ENCODE measurements at regions of chr5 and their contacts with region 1.

Region 1: GRCh38 chr5:139787568-139788293 is 7.9 kb upstream of the PSD2 start:
- DNase-seq: peak; percentile 95
- H3K4me3 Mint-ChIP-seq: peak overlapping the region; percentile 85
- H3K27ac Mint-ChIP-seq: peak overlapping the region; percentile 19
- H3K4me1 Mint-ChIP-seq: peaks cover 6% of the 10 kb centered on the region
- H3K27me3 Mint-ChIP-seq: peaks cover 42% of the 10 kb centered on the region

Region 2: GRCh38 chr5:139817362-139817761 is 29.6 kb after region 1 on chr5:
- intact Hi-C with region 1: no loop called
- DNase-seq: no peak
- H3K4me3 Mint-ChIP-seq: no peak overlapping the region
- H3K27ac Mint-ChIP-seq: no peak overlapping the region
- H3K4me1 Mint-ChIP-seq: no peaks in the 10 kb centered on the region
- H3K27me3 Mint-ChIP-seq: peaks cover 8% of the 10 kb centered on the region

Region 3: DNA sequence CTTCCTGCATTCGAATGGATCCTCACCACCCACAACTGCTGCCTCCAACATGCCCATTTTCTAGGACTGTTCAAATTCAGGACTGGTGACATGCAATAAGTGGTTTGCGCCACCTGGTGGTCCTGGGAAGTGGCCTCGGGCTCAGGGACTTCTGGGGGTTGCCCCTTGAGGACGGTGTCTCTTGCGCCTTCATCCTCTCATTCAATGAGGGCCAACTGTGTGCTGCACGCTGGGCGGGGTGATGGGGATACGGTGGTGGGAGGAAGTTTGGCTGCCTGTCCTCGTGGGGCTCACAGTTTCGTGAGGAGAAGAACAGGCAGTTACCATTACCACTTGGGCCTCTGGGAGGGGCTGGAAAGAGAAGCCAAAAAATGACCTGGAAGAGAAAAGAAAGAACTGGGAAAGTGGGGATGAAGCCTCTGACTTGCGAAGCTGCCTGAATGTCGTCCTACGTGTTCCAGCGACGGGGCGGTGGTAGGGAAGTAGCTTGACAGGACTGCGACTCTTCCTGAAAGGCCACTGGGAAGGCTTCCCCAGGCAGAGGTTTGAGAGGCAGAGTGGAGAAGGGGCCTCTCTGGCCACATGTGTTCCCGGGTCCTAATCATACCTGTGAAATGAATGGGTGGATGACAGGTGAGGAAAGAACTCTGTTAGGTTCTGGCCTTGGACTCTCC is 56.9 kb after region 1 on chr5:
- intact Hi-C with region 1: loop called (anchors 1 kb)
- DNase-seq: peak; percentile 86
- H3K4me3 Mint-ChIP-seq: no peak overlapping the region
- H3K27ac Mint-ChIP-seq: no peak overlapping the region
- H3K4me1 Mint-ChIP-seq: peaks cover 2% of the 10 kb centered on the region
- H3K27me3 Mint-ChIP-seq: peaks cover 55% of the 10 kb centered on the region

Region 4: GRCh38 chr5:139863855-139864558 is 76.3 kb after region 1 on chr5:
- intact Hi-C with region 1: loop called (anchors 1 kb)
- DNase-seq: peak; percentile 85
- H3K4me3 Mint-ChIP-seq: no peak overlapping the region
- H3K27ac Mint-ChIP-seq: no peak overlapping the region
- H3K4me1 Mint-ChIP-seq: no peaks in the 10 kb centered on the region
- H3K27me3 Mint-ChIP-seq: peaks cover 11% of the 10 kb centered on the region

Region 5: DNA sequence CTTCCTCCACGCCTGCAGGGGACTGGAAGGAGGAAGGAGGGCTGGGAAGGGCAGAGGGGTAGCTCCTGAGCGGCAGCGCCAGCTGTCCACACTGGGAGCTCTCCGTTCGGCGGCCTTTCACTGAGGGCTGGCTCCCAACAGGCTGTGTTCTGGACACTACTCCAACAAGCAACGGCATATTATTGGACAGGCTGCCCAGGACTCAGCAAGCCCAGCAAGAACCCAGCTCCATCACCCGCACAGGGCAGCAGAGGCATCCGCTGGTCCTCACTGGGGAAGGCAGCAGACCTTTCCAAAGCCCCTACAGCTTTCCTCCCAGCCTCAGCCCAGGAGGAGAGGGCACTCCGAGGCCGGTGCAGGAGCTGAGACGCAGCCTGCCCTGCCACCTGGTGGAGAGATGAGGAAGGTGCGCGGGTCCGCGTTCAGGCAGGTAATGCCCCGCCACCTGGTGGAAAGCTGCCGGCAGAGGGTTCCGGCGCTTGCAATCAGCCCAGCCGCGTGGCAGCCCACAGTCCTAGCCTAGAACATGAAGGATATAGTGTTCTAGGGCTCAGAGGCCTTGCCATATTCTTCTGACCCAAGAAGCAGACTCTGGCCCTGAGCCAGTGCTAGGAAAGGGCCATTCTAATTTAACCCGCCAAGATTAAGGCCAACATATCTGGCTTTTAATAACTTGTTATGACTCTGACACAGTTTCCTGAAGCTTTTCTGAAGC is 181.0 kb after region 1 on chr5:
- intact Hi-C with region 1: loop called (anchors 1 kb)
- DNase-seq: peak; percentile 96
- H3K4me3 Mint-ChIP-seq: no peak overlapping the region
- H3K27ac Mint-ChIP-seq: no peak overlapping the region
- H3K4me1 Mint-ChIP-seq: no peaks in the 10 kb centered on the region
- H3K27me3 Mint-ChIP-seq: peaks cover 30% of the 10 kb centered on the region

Region 6: GRCh38 chr5:140157032-140157803 is 369.5 kb after region 1 on chr5:
- intact Hi-C with region 1: loop called (anchors 1 kb)
- DNase-seq: peak; percentile 96
- H3K4me3 Mint-ChIP-seq: peak overlapping the region; percentile 63
- H3K27ac Mint-ChIP-seq: no peak overlapping the region
- H3K4me1 Mint-ChIP-seq: peaks cover 6% of the 10 kb centered on the region
- H3K27me3 Mint-ChIP-seq: peaks cover 6% of the 10 kb centered on the region

Measured in activated CD4-positive, alpha-beta T cell treated with anti-CD3 and anti-CD28 coated beads, Interleukin-2, amount 10 ng/mL, durations not matched to agents 24 days and 14 days (primary cell).